ENCODE measurements at regions of chr1 and their contacts with region 1.

Region 1: GRCh38 chr1:182962554-182963115 is 9.7 kb upstream of the SHCBP1L start:
- DNase-seq: peak; percentile 84
- H3K4me3 ChIP-seq: peak overlapping the region in 2 of 8 donors; percentile 17 to 41
- H3K27ac ChIP-seq: no peak overlapping the region
- H3K4me1 ChIP-seq: peaks cover 0 to 9% (median 8%) of the 10 kb centered on the region in 6 donors
- H3K27me3 ChIP-seq: peaks cover 0 to 8% (median 0%) of the 10 kb centered on the region in 7 donors
- CTCF ChIP-seq: peak; percentile 69 to 89 (median 77)
- POLR2A ChIP-seq: no peak

Region 2: GRCh38 chr1:183003203-183003602 is 40.6 kb after region 1 on chr1:
- intact Hi-C with region 1: no loop called
- DNase-seq: no peak
- H3K4me3 ChIP-seq: no peak overlapping the region
- H3K27ac ChIP-seq: peak overlapping the region in 2 of 8 donors; percentile 7 to 10
- H3K4me1 ChIP-seq: peaks cover 0 to 6% (median 0%) of the 10 kb centered on the region in 6 donors
- H3K27me3 ChIP-seq: peaks cover 0 to 10% (median 0%) of the 10 kb centered on the region in 7 donors
- CTCF ChIP-seq: no peak
- POLR2A ChIP-seq: no peak

Region 3: DNA sequence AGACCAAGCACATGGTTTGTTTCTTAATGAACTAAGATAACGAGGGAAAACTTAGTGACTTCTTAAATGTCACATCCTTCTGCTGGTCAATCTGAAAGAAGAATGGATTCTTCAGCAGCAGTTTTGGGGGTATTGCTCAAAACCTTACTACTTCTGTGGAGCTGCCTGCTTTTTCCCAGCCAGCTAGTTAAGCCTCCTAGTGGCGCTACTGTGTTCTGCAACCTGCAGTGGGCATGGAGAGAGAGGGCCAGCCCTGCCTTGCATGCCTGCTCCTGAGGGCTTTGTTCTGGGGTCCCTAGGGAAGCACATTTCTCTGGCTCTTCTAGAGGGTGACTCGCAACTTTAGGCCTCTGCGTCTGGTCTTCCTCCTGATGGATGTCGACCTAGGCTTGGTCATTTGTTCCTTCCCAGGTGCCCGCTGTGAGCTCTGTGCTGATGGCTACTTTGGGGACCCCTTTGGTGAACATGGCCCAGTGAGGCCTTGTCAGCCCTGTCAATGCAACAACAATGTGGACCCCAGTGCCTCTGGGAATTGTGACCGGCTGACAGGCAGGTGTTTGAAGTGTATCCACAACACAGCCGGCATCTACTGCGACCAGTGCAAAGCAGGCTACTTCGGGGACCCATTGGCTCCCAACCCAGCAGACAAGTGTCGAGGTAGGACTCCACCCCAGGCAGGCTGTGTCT is 265.5 kb after region 1 on chr1:
- intact Hi-C with region 1: loop called (anchors 10 kb)
- DNase-seq: no peak
- H3K4me3 ChIP-seq: no peak overlapping the region
- H3K27ac ChIP-seq: no peak overlapping the region
- H3K4me1 ChIP-seq: no peaks in the 10 kb centered on the region
- H3K27me3 ChIP-seq: no peaks in the 10 kb centered on the region
- CTCF ChIP-seq: peak; percentile 16 to 83 (median 68)
- POLR2A ChIP-seq: no peak

Measured in spleen (tissue), 13 donors.